Right cardiac atrium (tissue), 5 donors: ENCODE measurements at regions of chr3 and their contacts with region 1.

Region 1: GRCh38 chr3:136396916-136397315 is 146.8 kb downstream of the PCCB start:
- DNase-seq: no peak
- ATAC-seq: no peak
- H3K4me3 ChIP-seq: no peak overlapping the region
- H3K27ac ChIP-seq: no peak overlapping the region
- H3K4me1 ChIP-seq: no peaks in the 10 kb centered on the region
- H3K27me3 ChIP-seq: no peaks in the 10 kb centered on the region

Region 2: GRCh38 chr3:135965506-135966270 is 431.2 kb before region 1 on chr3 and contains the start of gene PPP2R3A:
- intact Hi-C with region 1: no loop called
- DNase-seq: peak; percentile 88 to 94 (median 92)
- ATAC-seq: peak; percentile 98 to 99
- H3K4me3 ChIP-seq: peak within 1 kb of the TSS; percentile 75
- H3K27ac ChIP-seq: peak within 1 kb of the TSS; percentile 66
- H3K4me1 ChIP-seq: no peaks in the 10 kb centered on the region
- H3K27me3 ChIP-seq: no peaks in the 10 kb centered on the region
- total RNA-seq, gene PPP2R3A: 40.9 to 89.6 (median 68.3) TPM

Region 3: GRCh38 chr3:136984837-136985236 is 587.9 kb after region 1 on chr3:
- intact Hi-C with region 1: loop called in 1 of 4 experiments (anchors 10 kb)
- DNase-seq: peak in 1 of 3 donors; percentile 58
- ATAC-seq: peak; percentile 83 to 84
- H3K4me3 ChIP-seq: no peak overlapping the region
- H3K27ac ChIP-seq: no peak overlapping the region
- H3K4me1 ChIP-seq: peaks cover 6% of the 10 kb centered on the region
- H3K27me3 ChIP-seq: no peaks in the 10 kb centered on the region

Region 4: GRCh38 chr3:137013955-137014688 is 617.2 kb after region 1 on chr3:
- intact Hi-C with region 1: loop called in 1 of 4 experiments (anchors 10 kb)
- DNase-seq: peak; percentile 89 to 95 (median 94)
- ATAC-seq: peak; percentile 94 to 97
- H3K4me3 ChIP-seq: peak overlapping the region; percentile 82
- H3K27ac ChIP-seq: peak overlapping the region; percentile 82
- H3K4me1 ChIP-seq: no peaks in the 10 kb centered on the region
- H3K27me3 ChIP-seq: no peaks in the 10 kb centered on the region